Activated T-helper 2 cell treated with anti-CD3 and anti-CD28 coated beads, Interferon-gamma antibody, Interleukin-2, Interleukin-4, amounts not matched to agents 10 μg/mL and 5 μg/mL and 100 μg/mL, durations not matched to agents 14 hours and 24 hours and 36 hours (primary cell): ENCODE measurements at regions of chr1 and their contacts with region 1.

Region 1: GRCh38 chr1:3618881-3619671 is 5.7 kb upstream of the TPRG1L start:
- DNase-seq: peak; percentile 62
- H3K4me3 Mint-ChIP-seq: no peak overlapping the region
- H3K27ac Mint-ChIP-seq: no peak overlapping the region
- H3K4me1 Mint-ChIP-seq: peaks cover 8% of the 10 kb centered on the region
- H3K27me3 Mint-ChIP-seq: no peaks in the 10 kb centered on the region

Region 2: DNA sequence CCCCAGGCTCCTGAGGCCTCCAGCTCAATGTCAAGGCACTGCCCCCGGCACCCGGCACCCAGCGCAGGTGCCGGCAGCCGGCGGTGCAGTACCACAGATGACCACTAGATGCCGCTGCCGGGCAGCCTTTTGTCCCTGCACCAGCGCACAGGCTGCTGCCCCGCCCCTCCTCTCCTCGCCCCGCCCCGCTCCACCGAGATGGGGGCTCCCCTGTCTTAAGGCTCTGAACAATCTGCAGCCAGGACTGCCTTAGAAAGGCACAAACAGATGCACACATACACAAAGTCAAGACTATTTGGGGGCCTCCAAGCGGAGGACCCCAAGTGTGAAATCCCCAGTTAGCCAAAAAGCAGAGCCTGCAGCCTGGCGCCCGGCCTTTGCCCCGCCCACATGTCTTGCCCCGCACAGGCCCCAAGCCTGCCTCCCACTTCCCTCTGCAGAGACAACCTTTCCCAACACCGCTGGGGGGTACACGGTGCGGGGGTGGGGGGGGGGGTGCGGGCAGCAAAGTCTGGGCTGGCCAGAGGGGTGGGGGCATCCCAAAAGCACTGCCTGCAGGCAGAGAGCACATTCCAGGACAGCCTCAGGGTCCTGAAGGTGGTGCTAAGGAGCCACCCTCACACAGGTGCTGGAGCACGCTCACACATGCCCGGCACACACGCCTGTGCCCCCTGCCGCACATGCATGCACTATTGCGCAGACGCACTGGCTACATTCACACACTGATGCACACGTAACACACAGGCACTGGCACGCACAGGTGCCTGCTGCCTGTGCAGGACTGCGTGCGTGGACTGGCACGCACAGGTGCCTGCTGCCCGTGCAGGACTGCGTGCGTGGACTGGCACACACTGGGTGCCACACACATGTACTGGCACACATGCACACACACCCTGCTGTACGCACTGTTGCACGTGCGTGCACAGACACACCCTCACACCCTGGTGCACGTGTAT is 127.5 kb before region 1 on chr1:
- intact Hi-C with region 1: loop called (anchors 1 kb)
- DNase-seq: peak; percentile 72
- H3K4me3 Mint-ChIP-seq: no peak overlapping the region
- H3K27ac Mint-ChIP-seq: no peak overlapping the region
- H3K4me1 Mint-ChIP-seq: peaks cover 4% of the 10 kb centered on the region
- H3K27me3 Mint-ChIP-seq: no peaks in the 10 kb centered on the region

Region 3: DNA sequence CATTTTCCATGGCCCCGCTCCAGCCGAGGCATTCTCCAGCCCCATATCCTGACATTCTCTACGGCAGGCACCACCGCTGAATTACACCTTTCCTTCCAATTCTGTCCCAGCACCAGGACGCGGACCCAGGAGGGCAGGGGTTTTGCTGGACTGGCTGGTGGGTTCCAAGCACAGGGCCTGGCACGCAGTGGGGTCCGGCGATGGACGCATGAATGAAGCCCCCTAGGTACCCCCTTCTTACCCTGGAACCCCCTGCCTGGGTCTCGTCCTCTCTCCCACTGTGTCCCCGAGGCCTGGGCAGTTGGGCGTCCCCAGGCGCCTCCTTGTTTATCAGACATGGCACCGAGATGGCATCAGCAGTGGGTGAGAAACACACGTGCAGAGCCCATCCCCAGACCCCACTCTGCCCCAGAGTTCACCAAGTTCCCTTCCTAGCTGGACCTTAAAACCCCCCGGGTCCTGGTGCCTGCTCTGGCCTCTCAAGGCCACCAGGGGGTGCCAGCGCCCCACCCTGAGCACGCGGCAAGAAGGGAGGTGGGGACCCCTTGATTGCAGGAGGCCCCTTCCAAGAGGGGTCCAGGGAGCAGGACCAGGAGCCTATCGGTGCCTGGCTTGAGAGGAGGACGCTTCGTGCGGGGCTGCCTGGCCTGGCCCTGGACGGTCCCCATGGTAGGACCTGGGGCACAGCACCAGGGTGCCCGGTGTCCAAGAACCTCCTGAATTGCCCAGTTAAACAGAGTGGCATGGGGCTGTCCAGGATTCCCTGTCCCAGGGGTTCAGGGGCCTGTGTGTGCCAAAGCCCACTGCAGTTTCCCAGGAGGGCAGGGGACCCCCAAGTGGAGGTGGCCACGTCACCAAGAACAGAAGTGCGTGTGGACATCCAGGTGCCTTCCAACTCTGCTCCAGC is 53.9 kb before region 1 on chr1:
- intact Hi-C with region 1: loop called (anchors 1 kb)
- DNase-seq: no peak
- H3K4me3 Mint-ChIP-seq: no peak overlapping the region
- H3K27ac Mint-ChIP-seq: no peak overlapping the region
- H3K4me1 Mint-ChIP-seq: no peaks in the 10 kb centered on the region
- H3K27me3 Mint-ChIP-seq: no peaks in the 10 kb centered on the region